ENCODE measurements at regions of chr16 and their contacts with region 1.

Region 1: GRCh38 chr16:30509081-30509765 is 17.1 kb downstream of the ZNF768 start:
- DNase-seq: no peak
- ATAC-seq: no peak
- H3K4me3 ChIP-seq: no peak overlapping the region
- H3K27ac ChIP-seq: no peak overlapping the region
- H3K4me1 ChIP-seq: no peaks in the 10 kb centered on the region
- H3K27me3 ChIP-seq: peaks cover 30% of the 10 kb centered on the region
- CTCF ChIP-seq: no peak
- POLR2A ChIP-seq: no peak
- RAD21 ChIP-seq: no peak

Region 2: DNA sequence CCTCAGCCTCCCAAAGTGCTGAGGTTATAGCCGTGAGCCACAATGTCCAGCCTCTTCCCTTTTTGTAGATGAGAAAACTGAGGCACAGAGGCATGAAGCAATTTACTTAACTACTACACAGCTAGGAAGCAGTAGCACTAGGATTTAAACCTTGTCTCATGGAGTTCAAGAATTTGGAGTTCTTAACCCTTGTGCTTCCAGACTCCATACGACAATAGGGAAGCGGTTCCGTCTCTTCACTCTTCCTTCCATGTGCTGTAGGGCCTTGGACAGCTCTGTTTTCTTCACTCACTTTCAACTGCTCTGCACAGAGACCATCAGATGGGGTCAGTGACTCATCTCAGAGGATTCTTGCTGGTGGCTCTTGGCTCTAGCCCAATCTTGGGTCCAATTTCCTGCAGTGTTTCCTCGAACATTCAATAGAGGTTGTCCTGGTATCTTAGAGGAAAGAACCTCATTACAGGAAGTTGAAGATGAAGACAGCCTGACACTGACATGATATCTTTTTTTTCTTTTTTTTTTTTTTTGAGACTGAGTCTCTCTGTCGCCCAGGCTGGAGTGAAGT is 17.4 kb before region 1 on chr16:
- CTCF ChIA-PET with region 1: no interaction called
- POLR2A ChIA-PET with region 1: no interaction called
- dilution Hi-C with region 1: no loop called
- in situ Hi-C with region 1: no loop called
- intact Hi-C with region 1: no loop called
- DNase-seq: peak; percentile 83
- ATAC-seq: peak; percentile 92
- H3K4me3 ChIP-seq: no peak overlapping the region
- H3K27ac ChIP-seq: no peak overlapping the region
- H3K4me1 ChIP-seq: peaks cover 3% of the 10 kb centered on the region; the same call in 1 of the 2 replicates
- H3K27me3 ChIP-seq: peaks cover 9% of the 10 kb centered on the region
- CTCF ChIP-seq: no peak
- POLR2A ChIP-seq: no peak
- RAD21 ChIP-seq: 0 out of 2 replicates have a peak, but pooled peaks have one; percentile 7

Region 3: DNA sequence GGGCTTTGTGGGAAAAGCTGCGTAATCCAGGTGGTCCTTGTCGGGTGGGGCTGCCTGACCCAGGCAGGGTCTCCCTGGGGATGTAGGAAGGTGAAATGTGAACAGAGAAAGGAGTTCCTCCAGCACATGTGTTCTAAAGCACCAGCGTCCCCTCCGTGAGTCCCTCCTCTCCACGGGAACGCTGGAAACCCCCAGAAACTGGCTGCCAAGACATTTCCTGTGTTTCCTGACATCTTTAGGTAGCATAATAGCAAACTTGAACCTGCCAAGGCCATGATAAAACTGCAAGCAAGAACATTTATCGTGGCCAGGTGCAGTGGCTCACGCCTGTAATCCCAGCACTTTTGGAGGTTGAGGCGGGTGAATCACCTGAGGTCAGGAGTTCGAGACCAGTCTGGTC is 720.3 kb after region 1 on chr16:
- CTCF ChIA-PET with region 1: no interaction called
- POLR2A ChIA-PET with region 1: interaction called, 18 read pairs
- dilution Hi-C with region 1: no loop called
- in situ Hi-C with region 1: no loop called
- intact Hi-C with region 1: no loop called
- DNase-seq: no peak
- ATAC-seq: no peak
- H3K4me3 ChIP-seq: no peak overlapping the region
- H3K27ac ChIP-seq: no peak overlapping the region
- H3K4me1 ChIP-seq: no peaks in the 10 kb centered on the region
- H3K27me3 ChIP-seq: peaks cover 3% of the 10 kb centered on the region; the same call in 1 of the 2 replicates
- CTCF ChIP-seq: no peak
- POLR2A ChIP-seq: no peak
- RAD21 ChIP-seq: no peak

Measured in IMR-90 (cell line).